ENCODE measurements at regions of chr22 and their contacts with region 1.

Region 1: GRCh38 chr22:19742160-19743066 is 18.2 kb upstream of the TBX1 start:
- DNase-seq: no peak
- ATAC-seq: no peak
- H3K4me3 ChIP-seq: no peak overlapping the region
- H3K27ac ChIP-seq: no peak overlapping the region
- H3K4me1 ChIP-seq: no peaks in the 10 kb centered on the region
- H3K27me3 ChIP-seq: no peaks in the 10 kb centered on the region
- CTCF ChIP-seq: no peak

Region 2: DNA sequence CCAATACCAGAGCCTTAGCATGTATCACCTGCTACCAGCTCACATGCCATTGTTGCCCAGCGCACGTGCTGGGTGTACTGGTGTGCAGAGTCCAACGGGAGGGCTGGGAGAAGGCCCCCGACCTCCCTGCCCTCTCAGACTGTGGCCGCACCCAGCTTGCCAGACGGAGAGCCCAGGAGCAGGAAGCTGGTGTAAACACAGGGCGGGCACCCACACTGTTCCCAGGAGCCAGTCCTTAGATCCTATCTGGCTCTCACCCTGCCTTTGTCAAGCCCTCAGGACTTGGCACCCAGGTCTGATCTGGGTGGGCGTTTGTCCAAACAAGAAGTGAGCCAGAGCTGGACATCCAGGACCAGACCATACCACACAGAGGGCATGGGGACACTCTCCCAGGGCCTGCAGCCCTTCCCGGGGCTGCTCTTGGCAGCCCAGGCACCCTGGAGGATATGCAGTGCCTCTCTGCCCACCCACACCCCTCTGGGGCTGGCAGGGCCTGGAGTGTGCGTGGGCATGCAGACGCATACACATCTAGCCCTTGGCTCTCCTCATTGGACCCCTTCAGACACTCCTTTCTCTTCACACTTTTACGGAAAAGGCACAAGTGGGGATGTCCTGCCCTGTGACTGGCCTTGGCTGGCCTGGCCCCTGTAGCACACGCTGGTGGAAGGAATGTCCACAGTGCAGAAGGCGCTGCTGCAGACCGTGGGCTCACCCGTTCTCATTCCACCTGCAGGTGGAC is 198.3 kb before region 1 on chr22:
- intact Hi-C with region 1: no loop called
- DNase-seq: peak in 1 of 6 donors; percentile 46
- ATAC-seq: peak in 1 of 4 donors; percentile 60
- H3K4me3 ChIP-seq: no peak overlapping the region
- H3K27ac ChIP-seq: no peak overlapping the region
- H3K4me1 ChIP-seq: no peaks in the 10 kb centered on the region
- H3K27me3 ChIP-seq: no peaks in the 10 kb centered on the region
- CTCF ChIP-seq: no peak

Region 3: DNA sequence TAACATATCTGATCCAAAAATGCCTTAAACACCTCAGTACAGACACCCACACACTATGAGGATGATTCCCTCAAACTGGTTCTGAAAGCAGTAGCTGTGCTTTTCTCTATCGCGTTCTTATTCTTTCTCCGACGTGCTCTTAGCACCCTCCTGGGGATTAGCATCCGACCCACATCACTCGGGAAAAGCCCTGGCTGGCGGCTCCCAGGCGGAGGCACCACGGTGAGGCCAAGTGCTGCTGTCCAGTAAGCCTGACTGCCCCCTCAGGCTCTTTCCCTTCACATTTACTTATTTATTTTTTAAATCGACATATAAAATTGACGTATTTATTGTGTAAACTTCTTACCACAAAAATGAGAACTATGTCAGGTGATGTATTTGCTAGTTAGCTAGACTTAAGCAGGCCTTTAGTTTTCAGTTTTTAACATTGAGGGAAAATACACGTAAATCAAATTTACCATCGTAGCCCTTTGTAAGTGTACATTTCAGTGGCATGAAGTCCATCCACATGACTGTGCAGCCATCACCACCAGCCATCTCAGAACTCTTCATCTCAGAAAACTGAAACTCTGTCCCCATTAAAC is 37.4 kb after region 1 on chr22:
- intact Hi-C with region 1: no loop called
- DNase-seq: peak in 1 of 6 donors; percentile 21
- ATAC-seq: no peak
- H3K4me3 ChIP-seq: no peak overlapping the region
- H3K27ac ChIP-seq: no peak overlapping the region
- H3K4me1 ChIP-seq: no peaks in the 10 kb centered on the region
- H3K27me3 ChIP-seq: no peaks in the 10 kb centered on the region
- CTCF ChIP-seq: no peak

Region 4: GRCh38 chr22:19903031-19903430 is 160.6 kb after region 1 on chr22:
- intact Hi-C with region 1: loop called in 1 of 3 experiments (anchors 5 kb)
- DNase-seq: no peak
- ATAC-seq: no peak
- H3K4me3 ChIP-seq: no peak overlapping the region
- H3K27ac ChIP-seq: no peak overlapping the region
- H3K4me1 ChIP-seq: no peaks in the 10 kb centered on the region
- H3K27me3 ChIP-seq: no peaks in the 10 kb centered on the region
- CTCF ChIP-seq: no peak

Region 5: DNA sequence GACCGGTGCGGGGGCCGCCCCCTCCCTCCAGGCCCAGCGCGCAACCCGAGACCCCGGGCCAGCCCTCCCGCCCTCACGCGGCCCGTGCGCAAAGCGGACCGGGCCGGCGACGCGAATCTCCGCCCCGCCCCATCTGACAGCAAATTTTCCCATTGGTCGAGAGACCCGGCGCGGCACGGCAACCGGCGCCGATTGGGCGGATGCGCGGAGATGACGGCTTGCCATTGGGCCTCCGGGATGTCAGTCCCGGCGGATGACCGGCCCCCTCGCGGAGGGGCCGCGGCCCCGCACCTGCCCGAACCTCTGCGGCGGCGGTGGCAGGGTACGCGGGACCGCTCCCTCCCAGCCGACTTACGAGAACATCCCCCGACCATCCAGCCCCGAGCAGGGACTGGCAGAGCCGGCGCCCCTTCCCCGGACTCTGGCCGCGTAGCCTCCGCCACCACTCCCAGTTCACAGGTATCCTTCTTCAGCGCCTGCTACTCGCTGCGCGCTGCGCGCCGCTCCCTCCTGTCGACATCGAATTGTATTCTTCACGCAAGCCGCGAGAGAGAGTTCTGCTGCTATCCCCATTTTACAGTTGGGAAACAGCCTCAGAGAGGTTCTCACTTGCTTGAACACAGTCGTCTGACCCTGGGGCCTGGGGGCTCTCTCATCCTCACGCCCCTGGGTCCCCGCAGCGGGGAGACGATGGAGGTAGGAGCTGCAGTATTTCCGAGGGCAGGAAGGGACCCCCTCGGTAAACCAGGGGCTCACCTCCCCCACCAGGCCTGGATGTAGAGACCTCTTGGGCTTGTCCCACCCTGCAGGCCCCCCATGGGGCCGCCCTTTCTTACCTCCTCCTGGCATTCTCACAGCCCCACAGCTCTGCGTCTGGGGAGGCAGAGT is 274.6 kb after region 1 on chr22 and contains the start of gene ARVCF:
- intact Hi-C with region 1: no loop called
- DNase-seq: peak; percentile 91 to 98 (median 94)
- ATAC-seq: peak; percentile 70 to 84 (median 82)
- H3K4me3 ChIP-seq: peak within 1 kb of the TSS; percentile 81 to 91 (median 88)
- H3K27ac ChIP-seq: peak within 1 kb of the TSS in 2 of 4 donors; percentile 7 to 37
- H3K4me1 ChIP-seq: peaks cover 3 to 10% (median 8%) of the 10 kb centered on the region in 3 donors
- H3K27me3 ChIP-seq: no peaks in the 10 kb centered on the region
- CTCF ChIP-seq: peak in 2 of 4 donors; percentile 10 to 23
- total RNA-seq, gene ARVCF: 5.0 to 19.4 (median 9.5) TPM